ENCODE measurements at regions of chr1 and their contacts with region 1.

Region 1: DNA sequence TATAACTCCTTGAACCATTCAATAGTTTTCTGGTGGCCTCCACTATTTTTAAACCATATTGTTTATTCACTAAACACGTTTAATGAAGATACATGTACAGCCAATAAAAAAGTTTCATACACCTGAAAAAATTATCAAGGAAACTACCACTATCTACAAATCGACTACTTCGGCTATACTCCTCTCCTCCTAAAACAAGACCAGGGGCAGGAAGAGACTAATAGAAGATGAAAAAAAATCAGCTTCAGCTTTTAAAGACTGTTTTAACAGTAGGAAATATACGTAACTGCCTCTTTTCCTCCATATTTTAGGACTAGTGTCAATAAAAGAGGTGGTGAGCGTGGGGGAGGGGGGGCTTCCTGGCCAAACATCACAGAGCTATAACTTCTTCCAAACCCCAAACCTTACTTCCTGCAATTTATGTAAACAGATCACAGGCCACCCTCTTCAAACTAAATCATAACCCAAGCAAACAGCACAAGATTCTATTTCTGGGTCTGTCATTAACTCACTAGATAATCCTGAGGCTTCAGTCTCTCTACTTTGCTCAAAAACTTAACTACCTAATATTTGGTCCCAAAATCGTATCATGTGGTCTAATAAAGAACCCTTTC is 15.1 kb downstream of the FOXJ3 start:
- DNase-seq: no peak
- ATAC-seq: peak; percentile 44 to 61
- H3K4me3 ChIP-seq: peak overlapping the region; percentile 14 to 40 (median 18)
- H3K27ac ChIP-seq: peak overlapping the region; percentile 75 to 87 (median 84)
- H3K4me1 ChIP-seq: peaks cover 83 to 86% of the 10 kb centered on the region in 2 donors
- H3K27me3 ChIP-seq: no peaks in the 10 kb centered on the region
- CTCF ChIP-seq: no peak
- POLR2A ChIP-seq: no peak

Region 2: GRCh38 chr1:42282024-42282579 is 37.9 kb before region 1 on chr1:
- in situ Hi-C with region 1: no loop called
- intact Hi-C with region 1: loop called (anchors 2 kb)
- DNase-seq: no peak
- ATAC-seq: peak; percentile 62 to 95
- H3K4me3 ChIP-seq: no peak overlapping the region
- H3K27ac ChIP-seq: peak overlapping the region in 2 of 4 donors; percentile 24 to 33
- H3K4me1 ChIP-seq: peaks cover 45 to 49% of the 10 kb centered on the region in 2 donors
- H3K27me3 ChIP-seq: no peaks in the 10 kb centered on the region
- CTCF ChIP-seq: no peak
- POLR2A ChIP-seq: no peak

Region 3: GRCh38 chr1:42379794-42380585 is 60.0 kb after region 1 on chr1:
- in situ Hi-C with region 1: no loop called
- intact Hi-C with region 1: no loop called
- DNase-seq: no peak
- ATAC-seq: peak; percentile 44 to 68
- H3K4me3 ChIP-seq: peak overlapping the region; percentile 53 to 66 (median 58)
- H3K27ac ChIP-seq: no peak overlapping the region
- H3K4me1 ChIP-seq: peaks cover 0 to 10% of the 10 kb centered on the region in 2 donors
- H3K27me3 ChIP-seq: peaks cover 10 to 29% (median 10%) of the 10 kb centered on the region in 3 donors
- CTCF ChIP-seq: no peak
- POLR2A ChIP-seq: no peak